Upper lobe of right lung (tissue), 1 donor: ENCODE measurements at regions of chr20 and their contacts with region 1.

Region 1: GRCh38 chr20:13158369-13158768 is 62.7 kb upstream of the ISM1 start:
- DNase-seq: no peak
- ATAC-seq: no peak
- H3K4me3 ChIP-seq: no peak overlapping the region
- H3K27ac ChIP-seq: no peak overlapping the region
- H3K4me1 ChIP-seq: no peaks in the 10 kb centered on the region
- H3K27me3 ChIP-seq: no peaks in the 10 kb centered on the region
- CTCF ChIP-seq: no peak

Region 2: DNA sequence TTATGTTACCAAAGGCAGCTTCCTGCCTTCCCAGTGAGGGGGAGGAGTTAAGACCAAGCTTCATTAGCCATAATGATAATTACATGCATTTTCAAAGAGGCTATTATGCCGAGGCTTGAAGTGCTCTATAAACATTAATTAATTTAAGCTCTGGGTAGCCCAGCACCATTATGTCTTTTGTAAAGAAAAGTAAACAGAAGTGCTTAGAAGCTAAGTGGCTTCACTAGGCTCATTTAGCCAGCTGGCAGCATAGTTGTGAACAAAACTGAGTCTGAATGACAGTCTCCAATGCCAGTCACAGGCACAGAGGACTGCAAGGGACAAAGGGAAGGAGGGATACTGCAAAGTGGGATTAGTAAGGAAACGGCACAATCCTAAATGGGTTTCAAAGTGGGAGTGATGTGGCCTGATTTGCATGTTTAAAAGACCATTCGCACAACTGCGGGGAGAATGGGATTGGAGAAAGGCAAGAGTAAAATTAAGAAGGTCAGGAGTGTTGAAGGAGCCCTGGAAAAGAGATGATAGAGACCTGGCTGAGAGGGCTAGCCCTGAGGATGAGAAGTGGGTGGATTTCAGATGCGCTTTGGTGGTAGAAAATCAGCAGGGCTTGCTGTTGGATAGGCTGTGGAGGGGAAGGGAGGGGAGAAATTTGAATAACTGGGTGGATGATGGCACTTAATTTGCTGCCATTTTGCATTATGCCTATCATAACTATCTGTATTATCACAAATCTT is 42.6 kb after region 1 on chr20:
- intact Hi-C with region 1: loop called (anchors 10 kb)
- DNase-seq: no peak
- ATAC-seq: no peak
- H3K4me3 ChIP-seq: no peak overlapping the region
- H3K27ac ChIP-seq: no peak overlapping the region
- H3K4me1 ChIP-seq: no peaks in the 10 kb centered on the region
- H3K27me3 ChIP-seq: no peaks in the 10 kb centered on the region
- CTCF ChIP-seq: no peak

Region 3: GRCh38 chr20:13261460-13262301 is 103.3 kb after region 1 on chr20:
- intact Hi-C with region 1: no loop called
- DNase-seq: no peak
- ATAC-seq: peak; percentile 67
- H3K4me3 ChIP-seq: no peak overlapping the region
- H3K27ac ChIP-seq: no peak overlapping the region
- H3K4me1 ChIP-seq: no peaks in the 10 kb centered on the region
- H3K27me3 ChIP-seq: no peaks in the 10 kb centered on the region
- CTCF ChIP-seq: peak; percentile 73